Activated CD4-positive, alpha-beta T cell treated with anti-CD3 and anti-CD28 coated beads, Interleukin-2, amount 10 ng/mL, durations not matched to agents 24 days and 14 days (primary cell): ENCODE measurements at regions of chr5 and their contacts with region 1.

Region 1: DNA sequence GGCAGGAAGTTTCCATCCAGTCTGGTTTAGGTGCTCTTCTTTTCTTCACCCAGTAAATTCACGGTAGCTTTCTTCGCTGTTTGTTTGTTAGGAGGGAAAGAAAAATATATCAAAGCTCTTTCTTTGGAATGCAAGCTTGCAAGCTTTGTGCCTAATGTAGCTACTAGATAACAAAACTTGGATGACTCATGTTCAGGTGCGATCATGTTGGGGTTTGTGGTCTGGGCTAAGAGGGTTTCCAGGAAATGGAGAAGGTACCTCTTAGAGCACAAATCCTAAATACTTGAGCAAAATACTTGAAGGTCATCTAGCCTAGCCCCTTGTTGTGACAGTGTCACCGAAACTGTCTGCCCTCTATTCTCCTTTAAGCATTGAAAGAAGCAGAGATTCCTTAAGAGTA is 17.7 kb downstream of the SRP19 start:
- DNase-seq: peak; percentile 88
- H3K4me3 Mint-ChIP-seq: peak overlapping the region; percentile 57
- H3K27ac Mint-ChIP-seq: peak overlapping the region; percentile 68
- H3K4me1 Mint-ChIP-seq: peaks cover 33% of the 10 kb centered on the region
- H3K27me3 Mint-ChIP-seq: no peaks in the 10 kb centered on the region

Region 2: GRCh38 chr5:112860929-112861637 is 17.7 kb before region 1 on chr5 and contains the start of gene SRP19:
- intact Hi-C with region 1: loop called (anchors 2 kb)
- DNase-seq: peak; percentile 98
- H3K4me3 Mint-ChIP-seq: peak within 1 kb of the TSS; percentile 95
- H3K27ac Mint-ChIP-seq: peak within 1 kb of the TSS; percentile 94
- H3K4me1 Mint-ChIP-seq: peaks cover 18% of the 10 kb centered on the region
- H3K27me3 Mint-ChIP-seq: peaks cover 17% of the 10 kb centered on the region
- total RNA-seq, gene SRP19: 67.4 and 74.3 TPM in 2 replicates

Region 3: GRCh38 chr5:112958093-112959088 is 79.6 kb after region 1 on chr5:
- intact Hi-C with region 1: loop called (anchors 2 kb)
- DNase-seq: no peak
- H3K4me3 Mint-ChIP-seq: no peak overlapping the region
- H3K27ac Mint-ChIP-seq: peak overlapping the region; percentile 57
- H3K4me1 Mint-ChIP-seq: peaks cover 26% of the 10 kb centered on the region
- H3K27me3 Mint-ChIP-seq: peaks cover 6% of the 10 kb centered on the region

Region 4: DNA sequence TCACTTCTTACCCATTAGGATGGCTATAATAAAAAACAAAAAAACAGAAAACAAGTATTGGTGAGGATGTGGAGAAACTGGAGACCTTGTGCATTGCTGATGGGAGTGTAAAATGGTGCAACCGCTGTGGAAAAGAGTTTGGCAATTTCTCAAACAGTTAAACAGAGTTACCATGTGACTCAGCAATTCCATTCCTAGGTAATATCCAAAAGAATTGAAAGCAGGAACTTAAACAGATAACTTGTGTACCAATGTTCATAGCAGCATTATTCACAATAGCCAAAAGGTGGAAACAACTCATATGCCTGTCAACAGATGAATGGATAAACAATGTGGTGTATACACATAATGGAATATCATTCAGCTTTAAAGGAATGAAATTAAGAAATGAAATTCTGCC is 126.7 kb after region 1 on chr5:
- intact Hi-C with region 1: no loop called
- DNase-seq: no peak
- H3K4me3 Mint-ChIP-seq: no peak overlapping the region
- H3K27ac Mint-ChIP-seq: no peak overlapping the region
- H3K4me1 Mint-ChIP-seq: peaks cover 7% of the 10 kb centered on the region
- H3K27me3 Mint-ChIP-seq: no peaks in the 10 kb centered on the region